Caco-2 (cell line): ENCODE measurements at regions of chr21 and their contacts with region 1.

Region 1: DNA sequence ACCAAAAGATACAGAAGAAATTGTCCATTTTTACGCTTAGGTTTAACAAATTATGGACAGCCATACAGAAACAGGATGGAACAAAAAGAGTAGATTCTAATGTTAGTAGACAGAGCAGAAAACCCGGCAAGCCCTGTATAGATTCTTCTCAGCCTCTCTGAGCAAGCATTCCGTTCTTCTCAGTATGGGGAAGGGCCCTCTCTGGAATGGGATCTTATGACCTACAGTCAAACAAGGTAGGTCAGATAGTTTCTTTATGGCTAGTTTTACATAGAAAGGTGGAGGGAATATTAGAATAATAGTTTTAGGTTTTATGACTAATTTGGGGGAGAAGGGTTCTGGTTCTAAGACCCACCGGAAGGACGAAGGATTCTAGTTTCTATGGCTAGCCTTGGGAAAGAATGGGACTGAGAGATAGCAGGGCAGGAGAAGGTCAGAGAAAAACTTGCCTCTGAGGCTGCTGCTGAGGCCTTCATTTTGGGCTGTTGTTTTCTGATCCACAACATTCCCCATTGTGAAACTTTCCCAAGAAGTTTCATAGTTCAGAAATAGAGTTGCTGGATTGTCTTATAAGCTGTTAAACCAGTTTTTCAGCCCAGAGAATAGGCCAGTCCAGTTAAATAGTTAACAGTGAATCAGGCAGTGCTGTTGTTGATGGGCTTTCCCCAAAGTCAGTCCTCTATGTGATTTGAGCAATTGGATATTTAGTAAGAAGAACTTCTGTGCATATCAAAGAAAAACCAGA is 77.2 kb downstream of the C21orf91 start:
- DNase-seq: peak in 1 of 2 experiments; percentile 40
- H3K4me3 ChIP-seq: no peak overlapping the region
- H3K4me3 Mint-ChIP-seq: peak overlapping the region; percentile 10
- H3K27ac Mint-ChIP-seq: peak overlapping the region; percentile 87
- H3K4me1 ChIP-seq: peaks cover 26% of the 10 kb centered on the region
- H3K4me1 Mint-ChIP-seq: peaks cover 32% of the 10 kb centered on the region
- H3K27me3 ChIP-seq: no peaks in the 10 kb centered on the region
- H3K27me3 Mint-ChIP-seq: no peaks in the 10 kb centered on the region
- CTCF ChIP-seq: no peak

Region 2: GRCh38 chr21:17709266-17709611 is 32.7 kb before region 1 on chr21:
- CTCF ChIA-PET with region 1: interaction called, 3 read pairs
- POLR2A ChIA-PET with region 1: no interaction called
- intact Hi-C with region 1: loop called (anchors 2 kb)
- DNase-seq: no peak
- H3K4me3 ChIP-seq: no peak overlapping the region
- H3K4me3 Mint-ChIP-seq: no peak overlapping the region
- H3K27ac Mint-ChIP-seq: no peak overlapping the region
- H3K4me1 ChIP-seq: peaks cover 4% of the 10 kb centered on the region
- H3K4me1 Mint-ChIP-seq: no peaks in the 10 kb centered on the region
- H3K27me3 ChIP-seq: no peaks in the 10 kb centered on the region
- H3K27me3 Mint-ChIP-seq: no peaks in the 10 kb centered on the region
- CTCF ChIP-seq: no peak

Region 3: DNA sequence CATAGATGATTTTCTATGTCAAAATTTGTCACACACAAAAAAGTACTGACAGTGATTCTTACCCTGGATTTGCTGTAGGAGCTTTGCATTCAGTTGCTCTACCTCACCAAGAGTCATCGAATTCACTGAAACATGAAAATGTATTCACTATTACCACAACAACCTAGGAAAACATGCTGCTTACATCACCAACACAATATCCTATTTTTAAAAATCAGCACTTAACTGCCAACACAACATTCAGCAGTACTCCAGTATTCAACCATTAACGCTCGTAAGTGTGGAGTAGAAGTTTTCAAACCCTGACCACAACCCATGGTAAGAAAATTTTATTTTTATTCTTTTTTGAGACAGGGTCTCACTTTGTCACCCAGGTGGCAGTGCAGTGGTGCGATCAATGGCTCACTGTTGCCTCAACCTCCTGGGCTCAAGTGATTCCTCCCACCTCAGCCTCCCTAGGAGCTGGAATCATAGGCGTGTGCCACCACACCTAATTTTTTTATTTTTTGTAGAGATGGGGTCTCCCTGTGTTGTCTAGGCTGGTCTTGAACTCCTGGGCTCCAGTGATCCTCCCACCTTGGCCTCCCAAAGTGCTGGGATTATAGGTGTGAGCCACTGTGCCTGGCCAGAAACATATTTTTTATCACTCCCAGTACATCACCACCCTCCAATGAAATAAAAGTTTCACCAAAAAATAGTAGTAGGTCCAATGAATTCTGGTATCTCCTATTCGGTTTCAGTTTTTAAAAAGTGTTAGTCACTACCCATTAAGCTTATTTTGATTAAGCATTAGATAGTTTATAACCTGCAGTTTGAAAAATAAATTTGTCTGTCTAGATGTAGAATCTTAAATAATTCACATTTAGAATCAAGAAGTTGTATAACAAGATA is 53.4 kb after region 1 on chr21:
- CTCF ChIA-PET with region 1: no interaction called
- POLR2A ChIA-PET with region 1: no interaction called
- intact Hi-C with region 1: loop called (anchors 2 kb)
- DNase-seq: no peak
- H3K4me3 ChIP-seq: no peak overlapping the region
- H3K4me3 Mint-ChIP-seq: peak overlapping the region; percentile 33
- H3K27ac Mint-ChIP-seq: no peak overlapping the region
- H3K4me1 ChIP-seq: peaks cover 10% of the 10 kb centered on the region
- H3K4me1 Mint-ChIP-seq: peaks cover 16% of the 10 kb centered on the region
- H3K27me3 ChIP-seq: no peaks in the 10 kb centered on the region
- H3K27me3 Mint-ChIP-seq: no peaks in the 10 kb centered on the region
- CTCF ChIP-seq: no peak